B cell (primary cell): ENCODE measurements at regions of chr3 and their contacts with region 1.

Region 1: GRCh38 chr3:112873632-112874031 is 27.0 kb upstream of the CD200R1L start:
- DNase-seq: peak; percentile 56
- ATAC-seq: peak; percentile 62
- H3K4me3 ChIP-seq: peak overlapping the region in 1 of 5 experiments; percentile 53
- H3K4me3 Mint-ChIP-seq: peak overlapping the region; percentile 74
- H3K27ac ChIP-seq: no peak overlapping the region
- H3K27ac Mint-ChIP-seq: peak overlapping the region; percentile 85
- H3K4me1 ChIP-seq: peaks cover 18 to 26% of the 10 kb centered on the region in 2 donors
- H3K4me1 Mint-ChIP-seq: peaks cover 36% of the 10 kb centered on the region
- H3K27me3 ChIP-seq: no peaks in the 10 kb centered on the region
- H3K27me3 Mint-ChIP-seq: no peaks in the 10 kb centered on the region
- CTCF ChIP-seq: no peak

Region 2: GRCh38 chr3:112582244-112582874 is 291.3 kb before region 1 on chr3:
- CTCF ChIA-PET with region 1: no interaction called
- POLR2A ChIA-PET with region 1: no interaction called
- intact Hi-C with region 1: loop called (anchors 10 kb)
- DNase-seq: peak; percentile 43
- ATAC-seq: no peak
- H3K4me3 ChIP-seq: no peak overlapping the region
- H3K4me3 Mint-ChIP-seq: no peak overlapping the region
- H3K27ac ChIP-seq: no peak overlapping the region
- H3K27ac Mint-ChIP-seq: no peak overlapping the region
- H3K4me1 ChIP-seq: peaks cover 28 to 32% of the 10 kb centered on the region in 2 donors
- H3K4me1 Mint-ChIP-seq: peaks cover 31% of the 10 kb centered on the region
- H3K27me3 ChIP-seq: no peaks in the 10 kb centered on the region
- H3K27me3 Mint-ChIP-seq: no peaks in the 10 kb centered on the region
- CTCF ChIP-seq: peak; percentile 76

Region 3: GRCh38 chr3:112858410-112859069 is 15.1 kb before region 1 on chr3:
- CTCF ChIA-PET with region 1: no interaction called
- POLR2A ChIA-PET with region 1: no interaction called
- intact Hi-C with region 1: loop called (anchors 2 kb)
- DNase-seq: peak; percentile 50
- ATAC-seq: peak; percentile 65
- H3K4me3 ChIP-seq: no peak overlapping the region
- H3K4me3 Mint-ChIP-seq: peak overlapping the region; percentile 66
- H3K27ac ChIP-seq: no peak overlapping the region
- H3K27ac Mint-ChIP-seq: peak overlapping the region; percentile 69
- H3K4me1 ChIP-seq: peaks cover 25 to 32% of the 10 kb centered on the region in 2 donors
- H3K4me1 Mint-ChIP-seq: peaks cover 37% of the 10 kb centered on the region
- H3K27me3 ChIP-seq: no peaks in the 10 kb centered on the region
- H3K27me3 Mint-ChIP-seq: no peaks in the 10 kb centered on the region
- CTCF ChIP-seq: no peak

Region 4: GRCh38 chr3:113128386-113129015 is 254.9 kb after region 1 on chr3:
- CTCF ChIA-PET with region 1: no interaction called
- POLR2A ChIA-PET with region 1: no interaction called
- intact Hi-C with region 1: no loop called
- DNase-seq: no peak
- ATAC-seq: no peak
- H3K4me3 ChIP-seq: no peak overlapping the region
- H3K4me3 Mint-ChIP-seq: no peak overlapping the region
- H3K27ac ChIP-seq: no peak overlapping the region
- H3K27ac Mint-ChIP-seq: no peak overlapping the region
- H3K4me1 ChIP-seq: no peaks in the 10 kb centered on the region
- H3K4me1 Mint-ChIP-seq: no peaks in the 10 kb centered on the region
- H3K27me3 ChIP-seq: no peaks in the 10 kb centered on the region
- H3K27me3 Mint-ChIP-seq: no peaks in the 10 kb centered on the region
- CTCF ChIP-seq: no peak